Caco-2 (cell line): ENCODE measurements at regions of chr10 and their contacts with region 1.

Region 1: DNA sequence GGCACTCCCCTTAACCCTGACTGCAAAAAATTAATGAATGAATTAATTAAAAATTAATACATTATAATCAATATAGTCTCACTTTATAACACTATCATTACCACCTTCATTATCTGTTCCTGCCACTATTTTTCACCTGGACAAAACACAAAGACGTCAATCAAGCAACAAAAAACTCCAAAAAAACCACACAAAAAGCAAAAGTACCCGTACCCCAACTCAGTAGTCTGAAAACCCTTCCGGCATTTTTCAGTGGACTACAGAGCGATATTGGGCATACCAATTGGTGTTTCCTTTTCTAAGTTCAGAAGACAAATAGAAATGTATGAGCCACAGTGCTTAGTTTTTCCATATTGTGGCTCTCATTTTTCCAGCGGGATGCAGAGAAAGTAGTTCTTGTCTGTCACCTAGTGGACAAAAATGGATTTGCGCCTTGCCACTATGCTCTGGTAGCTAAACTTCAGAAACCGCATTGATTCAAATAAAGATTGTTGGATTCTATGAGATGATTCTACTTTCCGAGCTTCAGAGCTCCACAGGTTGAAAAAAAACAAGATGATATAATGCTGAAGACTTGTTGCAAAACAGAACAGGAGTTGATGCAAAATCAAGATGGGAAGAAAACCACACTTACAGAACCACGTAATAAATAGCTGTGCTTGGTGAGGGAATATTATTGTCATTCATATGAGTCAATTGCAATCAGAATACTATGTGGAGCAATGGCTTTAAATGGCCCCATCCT is 50.6 kb upstream of the ITGB1 start:
- DNase-seq: peak; percentile 63 to 82
- H3K4me3 ChIP-seq: no peak overlapping the region
- H3K4me3 Mint-ChIP-seq: peak overlapping the region; percentile 20
- H3K27ac Mint-ChIP-seq: no peak overlapping the region
- H3K4me1 ChIP-seq: peaks cover 25% of the 10 kb centered on the region
- H3K4me1 Mint-ChIP-seq: peaks cover 24% of the 10 kb centered on the region
- H3K27me3 ChIP-seq: no peaks in the 10 kb centered on the region
- H3K27me3 Mint-ChIP-seq: no peaks in the 10 kb centered on the region
- CTCF ChIP-seq: peak; percentile 99

Region 2: DNA sequence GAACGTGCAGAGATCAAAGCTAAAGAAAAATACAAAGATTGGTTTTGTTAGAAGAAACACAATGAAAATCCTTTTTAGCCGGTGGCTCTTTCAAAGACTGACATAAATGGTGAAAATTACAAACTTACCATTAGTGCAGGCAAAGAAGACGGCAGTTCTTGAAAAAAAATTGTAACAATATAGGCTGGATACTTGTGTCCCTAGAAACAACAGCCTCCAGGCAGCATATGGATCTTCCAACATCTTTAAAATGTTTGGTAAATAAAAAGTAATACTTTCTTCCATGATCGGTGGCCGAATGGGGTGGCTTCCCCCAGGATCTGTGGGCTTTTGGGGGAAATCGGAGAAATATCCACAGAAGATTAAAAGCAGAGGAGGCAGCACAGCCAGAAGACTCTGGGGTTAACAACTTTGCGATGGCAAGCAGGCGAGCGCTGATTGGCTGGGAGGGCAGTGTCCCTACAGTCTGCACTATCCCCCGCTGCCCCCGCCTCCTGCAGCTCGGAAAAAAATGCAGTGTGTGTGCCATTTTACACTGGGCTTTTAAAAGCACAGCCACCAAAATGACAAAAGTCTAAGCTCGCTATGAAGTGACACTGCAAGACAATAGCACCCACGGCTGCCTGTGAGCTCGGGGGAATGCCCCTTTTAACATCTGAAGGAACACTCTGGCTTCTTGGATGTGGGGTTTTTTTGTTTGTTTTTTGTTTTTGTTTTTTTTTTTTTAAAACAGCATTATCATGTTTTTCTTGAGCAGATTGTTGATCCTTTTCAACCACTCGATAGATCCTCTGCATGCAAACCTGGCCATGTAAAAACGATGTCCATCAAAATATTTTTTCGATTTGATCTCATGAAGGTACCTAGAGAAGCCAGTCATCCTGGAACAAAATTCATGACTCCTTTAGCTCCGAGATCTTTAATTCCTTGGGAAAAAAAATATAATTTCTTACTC is 630.0 kb before region 1 on chr10:
- CTCF ChIA-PET with region 1: no interaction called
- POLR2A ChIA-PET with region 1: no interaction called
- intact Hi-C with region 1: loop called (anchors 5 kb)
- DNase-seq: peak; percentile 93 to 95
- H3K4me3 ChIP-seq: peak overlapping the region; percentile 70
- H3K4me3 Mint-ChIP-seq: no peak overlapping the region
- H3K27ac Mint-ChIP-seq: no peak overlapping the region
- H3K4me1 ChIP-seq: peaks cover 5% of the 10 kb centered on the region; the same call in 1 of the 2 replicates
- H3K4me1 Mint-ChIP-seq: no peaks in the 10 kb centered on the region
- H3K27me3 ChIP-seq: no peaks in the 10 kb centered on the region
- H3K27me3 Mint-ChIP-seq: no peaks in the 10 kb centered on the region
- CTCF ChIP-seq: no peak

Region 3: GRCh38 chr10:32650246-32650655 is 358.4 kb before region 1 on chr10:
- CTCF ChIA-PET with region 1: no interaction called
- POLR2A ChIA-PET with region 1: no interaction called
- intact Hi-C with region 1: loop called (anchors 1 kb)
- DNase-seq: no peak
- H3K4me3 ChIP-seq: no peak overlapping the region
- H3K4me3 Mint-ChIP-seq: no peak overlapping the region
- H3K27ac Mint-ChIP-seq: no peak overlapping the region
- H3K4me1 ChIP-seq: no peaks in the 10 kb centered on the region
- H3K4me1 Mint-ChIP-seq: no peaks in the 10 kb centered on the region
- H3K27me3 ChIP-seq: no peaks in the 10 kb centered on the region
- H3K27me3 Mint-ChIP-seq: peaks cover 3% of the 10 kb centered on the region
- CTCF ChIP-seq: peak in 1 of 2 experiments; percentile 16

Region 4: GRCh38 chr10:32795598-32796183 is 213.0 kb before region 1 on chr10:
- CTCF ChIA-PET with region 1: interaction called, 8 read pairs
- POLR2A ChIA-PET with region 1: no interaction called
- intact Hi-C with region 1: loop called (anchors 1 kb)
- DNase-seq: peak in 1 of 2 experiments; percentile 45
- H3K4me3 ChIP-seq: no peak overlapping the region
- H3K4me3 Mint-ChIP-seq: no peak overlapping the region
- H3K27ac Mint-ChIP-seq: no peak overlapping the region
- H3K4me1 ChIP-seq: no peaks in the 10 kb centered on the region
- H3K4me1 Mint-ChIP-seq: no peaks in the 10 kb centered on the region
- H3K27me3 ChIP-seq: no peaks in the 10 kb centered on the region
- H3K27me3 Mint-ChIP-seq: peaks cover 5% of the 10 kb centered on the region
- CTCF ChIP-seq: peak; percentile 75 to 95

Region 5: DNA sequence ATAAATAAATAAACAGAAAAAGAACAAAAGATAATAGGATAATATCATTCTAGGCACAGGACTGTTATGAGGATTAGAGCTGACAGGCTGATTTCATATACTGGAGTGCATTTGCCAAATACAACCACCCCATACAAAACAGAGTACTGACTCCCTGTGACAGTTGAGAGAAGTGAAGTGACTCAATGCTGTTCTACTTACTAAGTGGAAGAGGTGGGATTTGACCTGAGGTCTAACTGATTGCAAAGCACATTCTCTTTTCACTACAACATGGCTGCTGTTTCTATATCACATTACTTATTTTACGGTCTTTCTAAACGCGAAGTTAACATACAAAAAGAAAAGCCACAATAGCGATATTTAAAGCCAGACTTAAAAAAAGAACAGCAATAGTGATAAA is 102.1 kb before region 1 on chr10:
- CTCF ChIA-PET with region 1: interaction called, 5 read pairs
- POLR2A ChIA-PET with region 1: no interaction called
- intact Hi-C with region 1: loop called (anchors 5 kb)
- DNase-seq: no peak
- H3K4me3 ChIP-seq: no peak overlapping the region
- H3K4me3 Mint-ChIP-seq: no peak overlapping the region
- H3K27ac Mint-ChIP-seq: no peak overlapping the region
- H3K4me1 ChIP-seq: peaks cover 16% of the 10 kb centered on the region
- H3K4me1 Mint-ChIP-seq: peaks cover 3% of the 10 kb centered on the region
- H3K27me3 ChIP-seq: no peaks in the 10 kb centered on the region
- H3K27me3 Mint-ChIP-seq: no peaks in the 10 kb centered on the region
- CTCF ChIP-seq: no peak

Region 6: DNA sequence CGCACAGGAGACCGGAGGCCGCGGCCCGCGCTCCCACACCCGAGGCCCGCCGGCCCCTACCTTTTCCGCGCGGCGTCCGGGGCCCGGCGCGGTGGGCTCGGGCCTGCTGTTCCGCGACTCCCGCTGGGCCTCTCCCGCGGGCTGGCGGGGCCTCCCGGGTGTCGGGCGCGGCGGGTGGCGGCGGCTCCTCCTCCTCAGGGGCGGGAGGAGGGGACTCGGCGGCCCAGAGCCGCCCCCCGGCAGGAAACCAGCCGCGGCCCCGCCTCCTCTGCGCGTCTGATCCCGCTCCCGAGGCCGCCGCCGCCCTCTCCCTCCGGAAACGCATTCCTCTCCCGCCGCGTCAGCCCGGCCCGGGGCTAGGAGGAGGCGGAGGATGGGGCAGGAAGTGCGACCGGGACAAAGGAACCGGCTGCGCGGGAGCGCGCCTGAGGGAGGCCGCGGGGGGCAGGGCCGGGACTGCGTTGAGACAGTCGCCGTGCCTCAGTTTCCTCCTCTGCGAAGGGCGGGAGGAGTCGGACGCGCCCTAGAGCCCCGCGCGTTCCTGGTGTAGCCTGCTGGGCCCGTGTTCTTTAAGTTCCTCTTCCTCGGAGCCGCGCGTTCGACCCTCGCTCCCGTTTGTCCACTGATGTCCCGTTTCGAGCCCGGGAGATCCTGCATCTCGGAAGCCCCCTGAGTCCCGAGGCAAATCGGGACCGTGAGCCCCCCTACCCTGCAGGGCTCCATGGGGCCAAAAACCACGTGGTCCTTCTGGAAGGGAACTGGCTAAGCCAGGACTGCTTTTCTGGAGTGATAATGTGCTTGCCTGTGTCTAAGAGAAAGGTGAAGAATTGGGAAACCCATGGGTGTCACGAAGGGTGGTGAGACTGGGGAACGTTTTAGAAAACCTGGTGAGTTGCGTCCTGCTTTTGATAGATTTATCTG is 50.3 kb before region 1 on chr10 and contains the start of gene ITGB1:
- CTCF ChIA-PET with region 1: interaction called, 3 read pairs
- POLR2A ChIA-PET with region 1: interaction called, 3 read pairs
- intact Hi-C with region 1: loop called (anchors 1 kb)
- DNase-seq: peak; percentile 98 to 100
- H3K4me3 ChIP-seq: peak within 1 kb of the TSS; percentile 91
- H3K4me3 Mint-ChIP-seq: peak within 1 kb of the TSS; percentile 92
- H3K27ac Mint-ChIP-seq: peak within 1 kb of the TSS; percentile 99
- H3K4me1 ChIP-seq: peaks cover 49% of the 10 kb centered on the region
- H3K4me1 Mint-ChIP-seq: peaks cover 48% of the 10 kb centered on the region
- H3K27me3 ChIP-seq: no peaks in the 10 kb centered on the region
- H3K27me3 Mint-ChIP-seq: no peaks in the 10 kb centered on the region
- CTCF ChIP-seq: no peak
- total RNA-seq, gene ITGB1: 404 and 474 TPM in 2 replicates

Region 7: DNA sequence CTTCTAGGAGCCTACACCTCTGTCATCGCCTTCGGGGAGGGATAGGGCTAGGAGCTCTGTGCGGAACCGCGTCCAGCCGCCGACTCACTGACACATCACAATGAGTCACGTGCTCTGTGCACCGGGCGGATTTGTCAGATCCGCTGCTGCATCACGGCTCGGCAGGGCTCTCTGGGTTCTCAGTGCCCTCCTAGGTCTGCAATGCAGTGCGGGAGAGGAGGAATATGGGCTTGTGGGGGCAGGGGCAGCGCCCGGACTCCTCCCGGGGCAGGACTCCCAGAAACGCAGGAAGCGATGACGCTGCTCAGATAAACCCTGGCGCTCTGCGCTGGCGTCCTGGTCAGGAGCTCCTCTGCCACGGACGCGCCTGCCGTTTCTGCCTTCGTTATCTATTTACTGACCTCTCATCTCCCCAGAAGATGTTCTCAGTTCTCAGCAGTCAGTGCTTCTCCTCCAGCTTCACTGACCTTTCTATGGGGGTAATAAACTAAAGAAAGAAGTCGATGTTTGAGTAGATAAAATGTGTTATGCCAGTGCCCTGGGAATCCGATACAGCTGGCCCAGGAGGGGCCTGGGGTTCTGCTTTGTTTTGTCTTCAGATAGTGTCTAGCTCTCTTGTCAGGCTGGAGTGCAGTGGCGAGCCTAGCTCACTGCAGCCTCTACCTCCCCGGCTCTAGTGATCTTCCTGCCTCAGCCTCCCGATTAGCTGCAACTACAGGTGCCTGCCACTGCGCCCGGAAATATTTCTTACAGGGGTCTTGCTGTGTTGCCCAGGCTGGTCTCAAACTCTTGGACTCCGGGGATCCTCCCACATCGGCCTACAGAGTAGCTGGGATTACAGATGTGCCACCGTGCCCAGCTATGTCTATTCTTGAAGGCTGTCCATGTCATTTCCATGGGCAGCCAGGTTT is 27.9 kb before region 1 on chr10:
- CTCF ChIA-PET with region 1: interaction called, 6 read pairs
- POLR2A ChIA-PET with region 1: interaction called, 6 read pairs
- intact Hi-C with region 1: loop called (anchors 1 kb)
- DNase-seq: peak; percentile 92 to 96
- H3K4me3 ChIP-seq: peak overlapping the region; percentile 41
- H3K4me3 Mint-ChIP-seq: peak overlapping the region; percentile 94
- H3K27ac Mint-ChIP-seq: peak overlapping the region; percentile 97
- H3K4me1 ChIP-seq: peaks cover 42% of the 10 kb centered on the region
- H3K4me1 Mint-ChIP-seq: peaks cover 27% of the 10 kb centered on the region
- H3K27me3 ChIP-seq: no peaks in the 10 kb centered on the region
- H3K27me3 Mint-ChIP-seq: no peaks in the 10 kb centered on the region
- CTCF ChIP-seq: no peak

Region 8: DNA sequence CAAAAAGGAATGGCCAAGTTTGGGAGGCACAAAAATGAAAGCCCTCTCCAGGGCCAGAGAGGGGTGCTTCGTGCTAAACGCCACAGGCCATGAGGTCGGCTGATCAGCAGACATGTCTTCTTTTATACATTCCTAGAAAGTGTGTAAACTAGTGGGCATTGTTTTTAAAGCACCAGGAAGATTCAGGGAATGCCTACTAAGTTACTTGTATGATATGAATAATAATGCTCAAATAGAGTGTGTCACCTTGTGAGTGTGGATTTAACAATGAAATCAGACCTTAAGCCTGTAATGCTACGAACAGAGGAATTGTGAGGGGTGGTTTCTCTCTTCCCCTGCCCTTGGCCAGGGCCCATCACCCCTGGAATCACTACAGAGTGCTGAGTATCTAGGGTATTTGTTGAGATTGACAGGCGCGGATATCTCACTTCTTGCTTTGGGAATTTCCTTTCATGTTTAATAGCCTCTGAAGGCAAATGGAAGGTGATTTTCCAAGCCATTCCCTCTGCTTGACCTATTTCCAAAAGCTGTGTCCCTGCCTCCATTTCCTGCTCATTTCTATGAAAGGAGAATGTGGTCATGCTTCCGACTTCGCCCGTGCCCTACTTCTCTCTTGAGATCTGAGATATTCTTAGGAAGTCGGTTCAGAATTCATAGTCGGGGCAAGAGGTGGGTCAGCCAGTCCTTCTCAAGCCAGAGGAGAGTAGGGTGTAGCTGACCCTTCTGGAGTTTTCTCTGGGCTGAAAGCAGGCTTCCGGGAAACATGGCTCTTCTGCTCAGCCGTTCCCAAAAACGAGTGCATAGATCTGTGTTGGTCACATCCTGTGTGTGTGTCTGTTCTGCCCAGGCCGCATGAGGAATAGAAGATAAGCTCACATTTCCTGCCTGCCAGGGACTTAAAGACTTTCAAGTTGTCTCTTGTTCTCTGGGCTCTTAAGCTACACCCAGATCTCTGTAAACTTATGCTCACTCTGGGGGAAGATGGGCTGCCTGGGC is 117.1 kb after region 1 on chr10:
- CTCF ChIA-PET with region 1: no interaction called
- POLR2A ChIA-PET with region 1: no interaction called
- intact Hi-C with region 1: no loop called
- DNase-seq: no peak
- H3K4me3 ChIP-seq: no peak overlapping the region
- H3K4me3 Mint-ChIP-seq: no peak overlapping the region
- H3K27ac Mint-ChIP-seq: no peak overlapping the region
- H3K4me1 ChIP-seq: no peaks in the 10 kb centered on the region
- H3K4me1 Mint-ChIP-seq: no peaks in the 10 kb centered on the region
- H3K27me3 ChIP-seq: no peaks in the 10 kb centered on the region
- H3K27me3 Mint-ChIP-seq: peaks cover 2% of the 10 kb centered on the region
- CTCF ChIP-seq: no peak